Body of pancreas (tissue), 4 donors: ENCODE measurements at regions of chr2 and their contacts with region 1.

Region 1: GRCh38 chr2:237572021-237572741 is 5.8 kb downstream of the PRLH start:
- DNase-seq: peak; percentile 88 to 93 (median 90)
- ATAC-seq: peak; percentile 88
- H3K4me3 ChIP-seq: no peak overlapping the region
- H3K27ac ChIP-seq: no peak overlapping the region
- H3K4me1 ChIP-seq: peaks cover 13% of the 10 kb centered on the region
- H3K27me3 ChIP-seq: no peaks in the 10 kb centered on the region
- CTCF ChIP-seq: peak; percentile 93 to 98 (median 97)
- POLR2A ChIP-seq: no peak

Region 2: GRCh38 chr2:237413777-237414661 is 158.2 kb before region 1 on chr2 and contains the start of gene COL6A3:
- intact Hi-C with region 1: no loop called
- DNase-seq: peak in 3 of 4 donors; percentile 43 to 52 (median 44)
- ATAC-seq: peak; percentile 63
- H3K4me3 ChIP-seq: no peak within 1 kb of the TSS
- H3K27ac ChIP-seq: peak within 1 kb of the TSS in 3 of 4 donors; percentile 8 to 55 (median 34)
- H3K4me1 ChIP-seq: no peaks in the 10 kb centered on the region
- H3K27me3 ChIP-seq: no peaks in the 10 kb centered on the region
- CTCF ChIP-seq: no peak
- POLR2A ChIP-seq: peak in 2 of 3 donors; percentile 31 to 42
- total RNA-seq, gene COL6A3: 46.4 to 121 TPM

Region 3: GRCh38 chr2:237474931-237475703 is 97.1 kb before region 1 on chr2:
- intact Hi-C with region 1: loop called (anchors 5 kb)
- DNase-seq: peak; percentile 80 to 87 (median 85)
- ATAC-seq: peak; percentile 88
- H3K4me3 ChIP-seq: peak overlapping the region; percentile 57 to 59
- H3K27ac ChIP-seq: peak overlapping the region; percentile 84 to 91 (median 86)
- H3K4me1 ChIP-seq: peaks cover 33% of the 10 kb centered on the region
- H3K27me3 ChIP-seq: no peaks in the 10 kb centered on the region
- CTCF ChIP-seq: peak; percentile 75 to 94 (median 81)
- POLR2A ChIP-seq: peak; percentile 26 to 55 (median 54)

Region 4: DNA sequence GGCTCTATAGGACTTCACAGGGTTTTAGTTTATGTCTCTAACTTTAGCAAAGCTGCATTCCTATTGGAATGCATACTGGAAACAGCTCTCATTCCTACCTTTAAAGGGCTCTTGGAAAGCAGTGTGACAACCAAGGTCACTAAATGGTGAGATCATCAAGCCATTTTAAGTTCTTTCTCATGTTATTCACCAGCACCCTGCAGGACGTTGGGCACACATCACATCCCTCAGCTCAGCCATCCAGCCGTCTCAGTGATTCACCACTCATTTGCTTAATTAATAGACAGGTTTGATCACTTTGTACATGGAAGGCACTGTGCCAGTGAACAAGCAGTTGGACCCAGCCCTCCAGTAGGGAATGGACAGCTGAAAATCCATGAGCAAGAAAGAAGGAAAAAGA is 194.2 kb after region 1 on chr2:
- intact Hi-C with region 1: no loop called
- DNase-seq: no peak
- ATAC-seq: peak; percentile 62
- H3K4me3 ChIP-seq: no peak overlapping the region
- H3K27ac ChIP-seq: no peak overlapping the region
- H3K4me1 ChIP-seq: no peaks in the 10 kb centered on the region
- H3K27me3 ChIP-seq: no peaks in the 10 kb centered on the region
- CTCF ChIP-seq: no peak
- POLR2A ChIP-seq: no peak